ENCODE measurements at regions of chr1 and their contacts with region 1.

Region 1: GRCh38 chr1:84632673-84633434 is 57.4 kb downstream of the SSX2IP start:
- DNase-seq: no peak
- H3K4me3 ChIP-seq: no peak overlapping the region
- H3K27ac ChIP-seq: no peak overlapping the region
- H3K4me1 ChIP-seq: no peaks in the 10 kb centered on the region
- H3K27me3 ChIP-seq: no peaks in the 10 kb centered on the region
- CTCF ChIP-seq: no peak
- POLR2A ChIP-seq: no peak

Region 2: GRCh38 chr1:83588140-83588539 is 1044.7 kb before region 1 on chr1:
- intact Hi-C with region 1: loop called (anchors 5 kb)
- DNase-seq: no peak
- H3K4me3 ChIP-seq: no peak overlapping the region
- H3K27ac ChIP-seq: no peak overlapping the region
- H3K4me1 ChIP-seq: no peaks in the 10 kb centered on the region
- H3K27me3 ChIP-seq: no peaks in the 10 kb centered on the region
- CTCF ChIP-seq: no peak
- POLR2A ChIP-seq: no peak

Measured in vagina (tissue), 2 donors.